AG04450 (cell line): ENCODE measurements at regions of chr2 and their contacts with region 1.

Region 1: DNA sequence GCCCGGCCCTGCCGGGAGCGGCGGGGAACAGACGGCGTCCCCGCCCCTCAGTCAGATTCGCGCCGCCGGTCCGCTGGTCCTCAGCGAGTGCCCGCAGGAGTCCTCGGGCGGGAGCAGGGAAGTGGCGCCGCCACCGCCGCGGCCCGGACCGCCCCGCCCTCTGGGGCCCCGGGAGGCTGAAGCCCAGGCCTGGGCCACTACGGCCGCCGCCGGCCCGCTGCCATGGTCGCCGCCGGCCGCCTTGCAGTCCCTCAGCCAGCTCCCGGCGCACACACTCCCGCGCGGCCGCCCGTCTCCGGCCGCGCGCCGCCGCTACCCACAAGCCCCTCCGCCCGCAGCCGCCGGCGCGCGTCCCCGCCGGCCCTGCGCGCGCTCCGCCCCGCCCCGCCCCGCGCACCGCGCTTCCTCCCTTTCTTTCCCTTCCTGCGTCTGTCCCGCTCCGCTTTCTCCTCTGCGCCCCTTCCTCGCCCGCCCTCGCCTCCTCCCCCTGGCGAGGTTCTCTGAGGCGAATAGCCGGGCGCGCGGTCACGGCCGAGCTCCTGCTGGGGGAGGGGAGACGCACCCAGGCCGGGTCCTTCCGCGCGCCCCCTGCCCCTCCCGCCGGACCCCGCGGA is at the start of gene ROCK2:
- DNase-seq: peak; percentile 62
- H3K4me3 ChIP-seq: peak within 1 kb of the TSS; percentile 90
- H3K27ac ChIP-seq: peak within 1 kb of the TSS; percentile 97
- H3K27me3 ChIP-seq: no peaks in the 10 kb centered on the region
- CTCF ChIP-seq: no peak
- polyA plus RNA-seq, gene ROCK2: 21.9 and 28.2 TPM in 2 replicates

Region 2: DNA sequence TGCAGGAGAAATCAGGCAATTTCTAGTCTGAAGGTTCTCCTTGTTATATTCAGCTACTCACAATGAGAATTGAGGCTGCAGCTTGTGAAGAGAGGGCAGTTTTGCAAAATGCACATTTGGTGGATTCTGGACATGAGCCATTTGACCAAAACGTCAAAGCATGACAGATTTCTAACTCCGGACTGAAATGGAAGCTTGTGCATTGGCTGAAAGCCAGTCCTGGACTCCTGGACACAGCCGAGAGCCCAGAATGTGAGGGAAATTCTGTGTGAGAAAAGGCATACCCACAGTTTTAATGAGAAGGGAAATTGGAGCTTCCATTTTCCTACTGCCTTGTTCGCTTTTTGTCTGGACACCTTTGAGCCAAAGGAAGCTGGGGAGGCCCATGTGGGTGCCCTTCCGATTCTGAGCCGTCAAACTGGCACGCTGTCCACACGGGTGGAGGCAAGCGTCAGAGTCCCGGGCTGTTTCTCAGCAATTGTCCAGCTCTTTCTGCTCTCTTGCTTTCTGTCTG is 23.7 kb after region 1 on chr2:
- CTCF ChIA-PET with region 1: no interaction called
- POLR2A ChIA-PET with region 1: interaction called, 11 read pairs
- DNase-seq: no peak
- H3K4me3 ChIP-seq: no peak overlapping the region
- H3K27ac ChIP-seq: no peak overlapping the region
- H3K27me3 ChIP-seq: no peaks in the 10 kb centered on the region
- CTCF ChIP-seq: no peak

Region 3: DNA sequence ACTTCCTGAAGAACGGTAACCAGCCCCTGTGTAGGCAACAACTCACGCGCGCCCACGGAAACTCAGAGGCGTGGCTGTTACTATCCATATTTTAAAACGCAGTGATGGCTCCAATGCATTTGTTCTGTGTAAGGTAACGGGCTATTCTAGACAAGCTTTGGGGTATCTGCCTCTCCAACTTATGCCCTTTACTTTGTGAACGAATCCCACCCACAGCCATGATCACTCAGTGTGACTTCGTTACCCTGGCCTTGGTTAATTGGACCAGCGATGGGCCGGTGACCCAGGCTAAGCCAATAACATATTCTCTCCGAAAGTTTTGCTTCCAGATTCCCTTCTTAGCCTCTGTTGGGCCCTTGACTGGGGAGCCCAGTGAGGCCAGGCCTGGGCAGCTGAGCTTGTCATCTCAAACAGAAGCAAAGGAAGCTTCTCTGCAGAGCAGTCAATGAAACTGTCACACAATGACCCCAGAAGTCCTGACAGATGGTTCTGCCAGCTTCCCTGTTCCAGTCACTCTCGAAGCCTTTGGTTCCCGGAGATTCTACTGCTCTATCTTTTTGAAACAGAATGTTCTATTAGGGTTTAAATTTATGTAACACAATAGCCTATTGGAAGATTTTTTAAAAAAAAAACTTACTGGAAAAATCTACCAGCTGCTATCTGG is 30.7 kb after region 1 on chr2:
- CTCF ChIA-PET with region 1: no interaction called
- POLR2A ChIA-PET with region 1: interaction called, 46 read pairs
- DNase-seq: no peak
- H3K4me3 ChIP-seq: peak overlapping the region; percentile 53; the same call in 1 of the 2 replicates
- H3K27ac ChIP-seq: peak overlapping the region; percentile 99
- H3K27me3 ChIP-seq: no peaks in the 10 kb centered on the region
- CTCF ChIP-seq: no peak